Activated T-helper 1 cell treated with anti-CD3 and anti-CD28 coated beads, Interleukin-12 subunit alpha, Interleukin-12 subunit beta, Interleukin-2, Interleukin-4 antibody, amounts not matched to agents 30 ng/mL and 10 ng/mL and 1 ng/mL, durations not matched to agents 14 hours and 24 hours and 36 hours (primary cell): ENCODE measurements at regions of chr11 and their contacts with region 1.

Region 1: GRCh38 chr11:76380967-76381719 is at the starts of genes GVQW3 and THAP12:
- DNase-seq: peak; percentile 97
- H3K4me3 Mint-ChIP-seq: peak within 1 kb of the TSS; percentile 94
- H3K27ac Mint-ChIP-seq: peak within 1 kb of the TSS; percentile 95
- H3K4me1 Mint-ChIP-seq: peaks cover 44% of the 10 kb centered on the region
- H3K27me3 Mint-ChIP-seq: no peaks in the 10 kb centered on the region
- total RNA-seq, gene GVQW3: 3.9 and 4.7 TPM in 2 replicates
- total RNA-seq, gene THAP12: 78.3 and 81.2 TPM in 2 replicates

Region 2: DNA sequence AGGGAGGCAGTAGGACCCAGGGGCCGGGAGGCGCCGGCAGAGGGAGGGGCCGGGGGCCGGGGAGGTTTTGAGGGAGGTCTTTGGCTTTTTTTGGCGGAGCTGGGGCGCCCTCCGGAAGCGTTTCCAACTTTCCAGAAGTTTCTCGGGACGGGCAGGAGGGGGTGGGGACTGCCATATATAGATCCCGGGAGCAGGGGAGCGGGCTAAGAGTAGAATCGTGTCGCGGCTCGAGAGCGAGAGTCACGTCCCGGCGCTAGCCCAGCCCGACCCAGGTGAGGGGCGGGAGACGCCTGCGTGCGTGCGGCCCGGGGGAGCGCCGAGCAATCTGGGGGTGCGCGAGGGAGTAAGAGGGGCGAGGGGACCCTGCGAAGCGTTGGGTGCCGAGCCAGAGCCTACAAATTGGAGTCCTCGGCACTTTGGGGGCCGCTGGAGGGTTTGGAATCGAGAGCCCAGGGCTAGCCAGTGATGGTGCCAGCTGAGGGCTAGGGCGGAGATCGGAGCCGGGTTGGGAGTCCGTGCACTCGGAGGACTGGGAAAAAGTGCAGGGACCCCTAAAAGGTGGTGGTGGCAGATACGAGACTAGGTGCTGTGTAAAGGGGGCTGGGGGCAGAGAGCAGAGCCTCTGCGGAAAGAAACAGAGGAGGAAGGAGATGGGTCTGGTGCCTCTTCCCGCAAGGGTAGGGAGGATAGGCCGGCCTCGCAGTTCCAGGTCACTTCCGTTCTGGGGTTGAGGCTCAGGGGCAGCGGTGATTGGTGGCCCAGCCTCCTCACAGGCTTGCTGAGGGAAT is 818.9 kb before region 1 on chr11 and contains the start of gene SERPINH1:
- intact Hi-C with region 1: loop called (anchors 5 kb)
- DNase-seq: peak; percentile 61
- H3K4me3 Mint-ChIP-seq: peak within 1 kb of the TSS; percentile 92
- H3K27ac Mint-ChIP-seq: peak within 1 kb of the TSS; percentile 90
- H3K4me1 Mint-ChIP-seq: peaks cover 15% of the 10 kb centered on the region
- H3K27me3 Mint-ChIP-seq: peaks cover 4% of the 10 kb centered on the region
- total RNA-seq, gene SERPINH1: 24.1 and 25.3 TPM in 2 replicates

Region 3: DNA sequence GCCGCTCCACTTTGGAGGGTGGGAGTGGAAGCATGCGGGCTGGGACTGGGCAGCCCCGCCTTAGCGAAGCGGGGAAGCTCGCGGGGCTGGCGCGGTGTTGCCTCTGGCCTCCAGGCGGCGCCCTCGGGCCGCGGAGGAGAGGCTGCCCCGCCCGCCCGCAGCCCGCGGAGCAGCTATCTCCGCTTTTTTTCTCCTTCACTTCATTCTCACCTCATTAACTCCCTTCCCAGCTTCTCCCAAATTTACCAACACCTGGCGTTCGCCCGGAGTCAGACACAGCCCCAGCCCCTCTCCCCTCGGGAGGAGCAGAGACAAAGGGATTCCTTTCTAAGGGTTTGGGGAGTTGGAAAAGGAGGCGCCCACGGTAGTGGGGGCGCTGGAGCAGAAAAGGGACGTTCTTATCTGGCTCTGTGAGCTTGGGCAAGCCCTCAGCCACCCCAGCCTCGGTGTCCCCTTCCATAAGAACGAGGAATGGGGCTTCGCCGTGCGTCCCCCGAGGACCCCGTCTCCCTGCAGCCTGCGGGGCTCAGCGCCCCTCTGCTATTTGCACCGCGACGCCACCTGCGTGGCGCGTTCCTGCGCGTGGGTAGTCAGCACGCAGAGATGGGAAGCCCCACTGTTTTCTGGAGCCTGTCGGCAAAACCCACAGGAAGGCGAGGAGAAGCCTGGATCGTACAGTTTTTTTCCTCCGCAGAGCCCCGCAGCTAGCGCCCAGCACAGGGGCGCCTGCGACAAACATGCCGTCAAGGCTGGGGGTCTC is 173.3 kb before region 1 on chr11:
- intact Hi-C with region 1: loop called (anchors 5 kb)
- DNase-seq: peak; percentile 70
- H3K4me3 Mint-ChIP-seq: peak overlapping the region; percentile 73
- H3K27ac Mint-ChIP-seq: no peak overlapping the region
- H3K4me1 Mint-ChIP-seq: peaks cover 12% of the 10 kb centered on the region
- H3K27me3 Mint-ChIP-seq: peaks cover 56% of the 10 kb centered on the region

Region 4: DNA sequence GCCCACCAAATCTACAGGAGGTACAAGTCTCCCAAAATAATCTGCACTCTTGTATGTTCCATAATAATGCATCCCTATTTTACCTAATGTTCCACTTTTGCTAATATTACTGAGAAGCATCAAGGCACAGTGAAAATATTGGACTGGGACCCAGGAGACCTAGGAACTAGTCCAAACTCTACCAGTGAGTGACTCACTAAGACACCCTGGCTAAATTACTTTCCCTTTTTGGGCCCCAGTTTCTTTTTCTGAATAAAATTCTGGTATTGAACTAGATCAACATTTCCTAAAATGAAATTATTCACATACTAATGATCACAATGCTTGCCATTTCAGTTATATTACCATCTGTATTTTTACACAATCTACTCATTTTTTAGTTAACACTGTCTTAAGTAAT is 19.8 kb before region 1 on chr11:
- intact Hi-C with region 1: loop called (anchors 1 kb)
- DNase-seq: no peak
- H3K4me3 Mint-ChIP-seq: no peak overlapping the region
- H3K27ac Mint-ChIP-seq: no peak overlapping the region
- H3K4me1 Mint-ChIP-seq: peaks cover 30% of the 10 kb centered on the region
- H3K27me3 Mint-ChIP-seq: no peaks in the 10 kb centered on the region

Region 5: DNA sequence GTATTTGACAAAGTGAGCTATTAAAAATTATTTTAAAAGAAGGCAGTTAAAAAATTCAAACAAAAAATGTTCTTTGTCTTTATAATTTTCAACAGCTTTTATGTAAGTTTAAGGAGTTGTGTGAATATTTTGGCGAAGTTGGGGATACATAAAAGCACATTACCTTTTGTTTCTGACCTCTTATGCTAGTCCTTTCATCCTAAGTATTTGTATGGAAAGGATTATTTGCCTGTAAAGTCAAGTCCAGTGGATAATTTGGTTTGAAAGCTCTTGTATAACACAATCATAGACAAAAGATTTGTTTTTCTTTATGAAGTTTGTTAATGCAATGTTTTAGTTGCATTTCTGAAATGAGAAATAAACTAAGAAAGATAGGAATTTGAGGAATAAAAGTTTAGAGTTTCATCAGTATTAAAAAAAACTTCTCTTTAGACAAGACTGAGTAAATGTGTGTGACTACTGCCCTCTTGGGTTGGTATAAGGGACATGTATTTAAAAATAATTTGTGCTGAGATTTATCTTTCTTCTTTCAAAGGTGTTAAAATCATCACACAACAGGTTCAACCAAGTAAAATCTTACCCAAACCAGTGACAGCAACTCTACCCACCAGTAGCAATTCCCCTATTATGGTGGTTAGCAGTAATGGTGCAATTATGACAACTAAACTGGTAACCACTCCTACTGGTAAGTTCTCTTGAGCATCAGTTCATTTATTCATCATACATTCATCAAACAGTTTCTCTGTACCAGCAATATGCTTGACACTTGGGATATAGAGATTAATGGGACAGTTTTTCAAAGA is 131.9 kb after region 1 on chr11:
- intact Hi-C with region 1: loop called (anchors 10 kb)
- DNase-seq: no peak
- H3K4me3 Mint-ChIP-seq: no peak overlapping the region
- H3K27ac Mint-ChIP-seq: no peak overlapping the region
- H3K4me1 Mint-ChIP-seq: no peaks in the 10 kb centered on the region
- H3K27me3 Mint-ChIP-seq: no peaks in the 10 kb centered on the region

Region 6: DNA sequence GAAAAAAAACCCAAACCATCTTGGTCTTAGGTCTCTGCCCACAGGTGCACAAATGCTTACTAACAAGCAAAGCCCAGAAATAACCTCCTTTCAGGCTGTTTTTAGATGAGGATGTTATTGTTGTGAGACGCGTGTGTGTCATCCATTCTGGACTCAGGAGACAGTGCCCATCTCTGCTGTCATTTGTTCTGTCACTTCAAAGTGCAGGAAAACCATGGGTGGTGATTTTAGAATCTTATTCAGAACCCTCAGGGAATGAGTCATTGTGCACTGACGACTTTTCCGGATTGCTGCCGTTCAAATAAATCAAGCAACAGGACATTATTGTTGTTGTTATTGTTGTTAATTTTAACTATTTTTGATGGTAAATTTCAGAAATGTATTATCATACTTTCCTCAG is 179.1 kb after region 1 on chr11:
- intact Hi-C with region 1: no loop called
- DNase-seq: peak; percentile 14
- H3K4me3 Mint-ChIP-seq: no peak overlapping the region
- H3K27ac Mint-ChIP-seq: peak overlapping the region; percentile 28
- H3K4me1 Mint-ChIP-seq: peaks cover 10% of the 10 kb centered on the region
- H3K27me3 Mint-ChIP-seq: peaks cover 3% of the 10 kb centered on the region

Region 7: GRCh38 chr11:76654298-76654851 is 273.2 kb after region 1 on chr11:
- intact Hi-C with region 1: no loop called
- DNase-seq: no peak
- H3K4me3 Mint-ChIP-seq: no peak overlapping the region
- H3K27ac Mint-ChIP-seq: no peak overlapping the region
- H3K4me1 Mint-ChIP-seq: no peaks in the 10 kb centered on the region
- H3K27me3 Mint-ChIP-seq: peaks cover 15% of the 10 kb centered on the region

Region 8: GRCh38 chr11:76670485-76671236 is 289.5 kb after region 1 on chr11 and contains the start of gene LRRC32:
- intact Hi-C with region 1: loop called (anchors 5 kb)
- DNase-seq: no peak
- H3K4me3 Mint-ChIP-seq: peak within 1 kb of the TSS; percentile 77
- H3K27ac Mint-ChIP-seq: peak within 1 kb of the TSS; percentile 15
- H3K4me1 Mint-ChIP-seq: peaks cover 31% of the 10 kb centered on the region
- H3K27me3 Mint-ChIP-seq: peaks cover 12% of the 10 kb centered on the region
- total RNA-seq, gene LRRC32: 5.5 and 5.7 TPM in 2 replicates